ENCODE measurements at regions of chr1 and their contacts with region 1.

Region 1: DNA sequence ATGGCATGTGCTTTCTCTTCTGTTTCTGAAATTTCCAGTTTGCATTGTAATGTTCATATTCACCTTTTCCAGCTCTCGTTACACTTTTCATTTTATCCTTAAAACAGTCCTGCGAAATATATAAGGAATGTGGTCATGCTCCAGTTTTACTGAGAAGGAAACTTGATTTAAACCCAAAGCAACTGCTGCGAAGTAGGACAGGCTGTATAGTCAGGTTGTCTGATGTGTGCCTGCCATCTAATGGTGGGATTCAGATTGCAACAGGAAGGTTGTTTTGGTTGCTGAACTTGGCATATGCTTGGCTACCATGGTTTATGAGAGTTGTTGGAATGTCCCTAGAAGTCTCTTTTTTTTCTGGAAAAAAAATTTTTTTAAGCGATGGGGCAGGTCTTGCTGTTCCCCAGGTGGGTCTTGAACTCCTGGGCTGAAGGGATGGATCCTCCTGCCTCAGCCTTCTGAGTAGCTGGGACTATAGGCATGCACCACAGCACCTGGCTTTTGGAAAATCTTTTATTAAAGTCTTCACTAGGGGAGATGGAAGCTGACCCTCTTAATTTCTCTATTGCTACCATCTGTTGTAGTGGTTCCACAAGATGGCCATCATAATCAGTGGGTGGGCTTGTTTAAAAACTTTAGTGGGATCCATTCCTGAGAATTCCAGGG is 86.9 kb downstream of the UCK2 start:
- DNase-seq: peak in 5 of 10 donors; percentile 54 to 77 (median 68)
- H3K4me3 ChIP-seq: no peak overlapping the region
- H3K27ac ChIP-seq: no peak overlapping the region
- H3K27me3 ChIP-seq: no peaks in the 10 kb centered on the region
- CTCF ChIP-seq: peak; percentile 64 to 98 (median 90)

Region 2: DNA sequence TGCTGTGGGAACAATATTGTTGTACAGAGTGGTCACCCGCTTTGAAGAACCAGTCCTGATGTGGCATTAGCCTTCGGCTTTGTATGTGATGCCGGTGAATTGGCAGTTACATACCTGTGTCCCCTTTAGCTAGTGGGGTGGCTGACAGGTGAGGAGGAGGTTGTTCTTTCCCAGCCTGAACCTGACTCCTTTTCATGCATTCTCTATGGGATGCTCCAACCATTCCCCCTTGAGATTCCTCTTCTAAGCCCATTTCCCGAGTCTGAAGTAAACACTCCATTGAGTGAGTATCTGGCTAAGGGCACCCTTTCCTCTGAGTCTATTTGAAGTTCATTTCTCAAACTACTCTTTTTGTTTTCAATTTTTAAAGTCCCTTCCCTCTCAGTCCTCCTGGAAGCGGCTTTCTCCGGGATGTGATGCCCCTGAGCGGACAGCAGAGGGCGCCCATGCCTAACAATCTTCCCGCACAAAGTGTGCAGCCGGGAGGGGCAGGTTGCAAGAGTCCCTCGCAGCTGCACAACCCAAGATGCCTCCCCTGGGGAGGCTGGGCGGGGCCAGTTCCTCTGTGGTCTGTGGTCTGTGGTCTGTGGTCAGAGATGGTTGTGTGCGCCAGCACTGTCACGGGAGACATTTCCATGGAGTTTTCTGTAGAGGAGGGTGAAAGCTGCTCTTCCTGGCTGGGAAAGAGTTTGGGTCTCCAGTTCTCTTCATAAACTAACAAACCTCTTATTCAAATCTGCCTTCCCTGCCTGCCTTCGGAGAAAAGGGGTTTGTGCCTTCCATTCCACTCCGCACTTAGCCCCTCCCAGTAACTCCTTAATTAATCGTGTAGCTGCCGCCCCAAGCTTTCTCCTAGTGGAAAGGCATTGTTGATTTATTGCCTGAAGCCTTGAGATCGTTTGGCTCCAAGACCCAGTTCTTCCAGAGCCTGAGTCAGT is 521.4 kb before region 1 on chr1:
- intact Hi-C with region 1: loop called in 1 of 2 experiments (anchors 5 kb)
- DNase-seq: peak; percentile 62 to 87 (median 75)
- H3K4me3 ChIP-seq: peak overlapping the region in 42 of 59 donors; percentile 5 to 56 (median 31)
- H3K27ac ChIP-seq: no peak overlapping the region
- H3K27me3 ChIP-seq: peaks cover 0 to 21% (median 2%) of the 10 kb centered on the region in 45 donors
- CTCF ChIP-seq: peak; percentile 62 to 99 (median 96)

Region 3: GRCh38 chr1:165403835-165404482 is 510.3 kb before region 1 on chr1:
- intact Hi-C with region 1: loop called in 1 of 2 experiments (anchors 5 kb)
- DNase-seq: no peak
- H3K4me3 ChIP-seq: no peak overlapping the region
- H3K27ac ChIP-seq: no peak overlapping the region
- H3K27me3 ChIP-seq: peaks cover 0 to 6% (median 0%) of the 10 kb centered on the region in 45 donors
- CTCF ChIP-seq: peak in 54 of 56 donors; percentile 13 to 74 (median 56)

Region 4: GRCh38 chr1:165496501-165496900 is 417.8 kb before region 1 on chr1:
- intact Hi-C with region 1: no loop called
- DNase-seq: no peak
- H3K4me3 ChIP-seq: no peak overlapping the region
- H3K27ac ChIP-seq: no peak overlapping the region
- H3K27me3 ChIP-seq: no peaks in the 10 kb centered on the region
- CTCF ChIP-seq: no peak

Region 5: DNA sequence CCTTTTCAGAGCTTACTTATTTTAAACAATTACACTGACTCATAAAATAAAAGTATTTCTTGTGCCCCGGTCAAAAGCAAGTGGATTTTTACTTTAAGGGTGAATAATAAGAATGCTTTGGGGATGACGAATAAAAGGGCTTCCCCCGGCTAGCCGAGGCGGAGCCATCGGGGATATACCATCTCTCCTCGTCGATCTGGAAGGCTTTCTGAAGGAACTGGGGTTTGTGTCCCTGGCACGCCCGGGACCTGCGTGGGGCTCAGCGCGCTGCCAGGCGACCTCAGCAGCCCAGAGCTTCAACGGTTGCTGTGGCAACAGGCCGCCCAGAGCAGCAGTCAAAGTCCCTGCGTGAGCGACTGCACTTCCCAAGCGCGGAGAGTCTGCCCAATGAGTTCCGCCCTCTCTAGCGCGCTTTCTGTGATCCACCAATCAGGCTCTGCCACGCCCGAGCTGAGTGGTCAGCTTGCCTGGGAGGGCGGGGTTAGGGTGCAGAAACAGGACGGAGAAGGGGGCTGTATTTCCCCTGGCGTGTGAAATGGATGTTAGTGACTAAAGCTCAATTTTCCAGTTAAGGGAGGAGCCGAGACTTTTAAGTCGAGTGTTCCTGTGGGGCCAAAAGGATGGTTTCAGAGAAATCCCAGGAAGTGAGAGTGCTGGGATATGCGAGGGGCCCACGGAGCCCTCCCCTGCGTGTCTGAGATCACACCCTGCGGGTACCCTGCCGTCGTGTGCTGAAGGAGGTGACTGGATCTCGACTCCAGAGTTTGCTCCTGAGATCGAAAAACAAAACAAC is 316.2 kb before region 1 on chr1:
- intact Hi-C with region 1: loop called (anchors 2 to 5 kb)
- DNase-seq: peak; percentile 89 to 99 (median 96)
- H3K4me3 ChIP-seq: peak overlapping the region; percentile 41 to 96 (median 70)
- H3K27ac ChIP-seq: peak overlapping the region in 33 of 59 donors; percentile 4 to 84 (median 55)
- H3K27me3 ChIP-seq: peaks cover 0 to 18% (median 3%) of the 10 kb centered on the region in 45 donors
- CTCF ChIP-seq: peak in 20 of 56 donors; percentile 5 to 52 (median 28)

Region 6: GRCh38 chr1:165717918-165718515 is 196.2 kb before region 1 on chr1:
- intact Hi-C with region 1: loop called (anchors 1 to 5 kb)
- DNase-seq: peak in 4 of 10 donors; percentile 11 to 69 (median 37)
- H3K4me3 ChIP-seq: no peak overlapping the region
- H3K27ac ChIP-seq: no peak overlapping the region
- H3K27me3 ChIP-seq: no peaks in the 10 kb centered on the region
- CTCF ChIP-seq: peak; percentile 32 to 80 (median 66)

Region 7: GRCh38 chr1:165949335-165950130 is 35.3 kb after region 1 on chr1:
- intact Hi-C with region 1: no loop called
- DNase-seq: no peak
- H3K4me3 ChIP-seq: no peak overlapping the region
- H3K27ac ChIP-seq: no peak overlapping the region
- H3K27me3 ChIP-seq: no peaks in the 10 kb centered on the region
- CTCF ChIP-seq: no peak

Measured in dorsolateral prefrontal cortex (tissue), 120 donors.